ENCODE measurements at regions of chr15 and their contacts with region 1.

Region 1: GRCh38 chr15:92617549-92618520 is 37.7 kb downstream of the FAM174B start:
- DNase-seq: peak; percentile 99
- H3K4me3 ChIP-seq: no peak overlapping the region
- H3K27ac ChIP-seq: peak overlapping the region; percentile 72
- H3K4me1 ChIP-seq: peaks cover 29% of the 10 kb centered on the region
- H3K27me3 ChIP-seq: no peaks in the 10 kb centered on the region
- CTCF ChIP-seq: no peak
- POLR2A ChIP-seq: no peak

Region 2: DNA sequence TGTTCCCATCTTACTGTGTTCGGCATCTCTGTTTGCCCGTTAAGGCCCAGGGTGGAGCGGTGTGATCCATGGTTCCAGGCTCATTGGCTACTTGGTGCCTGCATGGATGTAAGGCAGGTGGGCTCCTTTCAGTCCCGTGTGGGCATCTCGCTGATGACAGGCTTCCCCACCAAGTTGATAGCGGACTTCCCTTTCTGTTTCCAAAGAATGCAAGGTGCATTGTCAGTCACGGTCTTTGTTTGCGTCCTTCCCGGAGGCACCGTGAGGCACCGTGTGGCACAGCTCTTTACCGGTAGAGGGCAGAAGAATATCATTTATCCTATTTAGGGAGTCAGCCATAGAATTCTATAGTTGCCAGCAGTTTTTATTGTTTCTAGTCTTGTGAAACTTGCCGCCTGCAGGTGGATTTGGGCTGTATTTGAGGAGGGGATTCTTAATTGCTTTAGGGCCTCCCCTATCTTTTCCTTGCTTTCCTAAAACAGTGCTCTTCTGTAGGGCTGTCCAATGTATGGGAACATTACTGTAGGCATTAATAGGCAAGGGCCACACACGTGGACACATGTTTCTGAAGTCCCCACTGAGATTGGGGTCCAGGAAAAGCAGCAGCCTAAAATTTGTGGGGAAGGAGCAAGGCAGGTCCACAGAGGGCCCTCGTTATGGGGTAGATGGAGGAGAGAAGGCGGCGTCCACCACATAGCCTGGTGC is 520.2 kb before region 1 on chr15:
- CTCF ChIA-PET with region 1: interaction called, 5 read pairs
- POLR2A ChIA-PET with region 1: no interaction called
- dilution Hi-C with region 1: no loop called
- intact Hi-C with region 1: loop called (anchors 10 kb)
- DNase-seq: peak; percentile 57
- H3K4me3 ChIP-seq: no peak overlapping the region
- H3K27ac ChIP-seq: no peak overlapping the region
- H3K4me1 ChIP-seq: no peaks in the 10 kb centered on the region
- H3K27me3 ChIP-seq: no peaks in the 10 kb centered on the region
- CTCF ChIP-seq: peak; percentile 68
- POLR2A ChIP-seq: no peak

Region 3: GRCh38 chr15:92533298-92533697 is 84.5 kb before region 1 on chr15:
- CTCF ChIA-PET with region 1: no interaction called
- POLR2A ChIA-PET with region 1: no interaction called
- dilution Hi-C with region 1: no loop called
- intact Hi-C with region 1: loop called (anchors 2 kb)
- DNase-seq: peak; percentile 86
- H3K4me3 ChIP-seq: no peak overlapping the region
- H3K27ac ChIP-seq: peak overlapping the region; percentile 82
- H3K4me1 ChIP-seq: peaks cover 21% of the 10 kb centered on the region
- H3K27me3 ChIP-seq: no peaks in the 10 kb centered on the region
- CTCF ChIP-seq: no peak
- POLR2A ChIP-seq: no peak

Region 4: DNA sequence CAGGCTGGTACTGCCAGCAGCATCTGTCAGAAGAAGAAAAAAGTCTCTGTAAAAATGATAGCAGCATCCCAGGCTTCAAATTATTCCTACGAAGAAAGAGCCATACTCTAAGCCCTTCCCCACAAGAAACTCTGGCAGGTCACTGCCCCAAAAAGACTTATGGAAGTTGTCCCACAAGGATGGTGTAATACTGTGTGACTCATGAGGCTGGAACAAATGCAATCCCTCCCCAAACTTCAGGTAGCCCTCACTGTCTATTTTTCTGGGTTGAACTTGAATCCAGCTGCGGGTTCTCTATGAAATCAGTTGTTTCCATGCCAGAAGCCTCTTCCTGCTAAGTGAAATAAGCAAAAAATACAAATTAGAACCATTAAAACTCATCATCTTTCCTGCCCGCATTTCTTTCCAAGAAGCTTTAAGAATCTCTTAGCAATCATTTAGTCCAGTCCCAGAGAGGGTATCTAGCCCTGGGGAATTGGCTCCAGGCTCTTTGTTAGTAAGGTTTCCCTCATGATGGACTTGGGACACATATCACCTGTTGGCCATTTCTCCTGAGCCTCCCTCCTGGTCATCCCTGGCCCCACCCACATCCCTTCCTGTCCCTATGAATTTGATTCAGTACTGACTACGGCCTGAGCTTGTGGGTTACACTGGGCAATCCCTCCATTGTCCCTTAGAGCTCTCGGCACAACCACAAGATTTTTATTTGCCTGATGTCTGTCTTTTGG is 13.9 kb before region 1 on chr15:
- CTCF ChIA-PET with region 1: no interaction called
- POLR2A ChIA-PET with region 1: no interaction called
- dilution Hi-C with region 1: no loop called
- intact Hi-C with region 1: no loop called
- DNase-seq: no peak
- H3K4me3 ChIP-seq: no peak overlapping the region
- H3K27ac ChIP-seq: no peak overlapping the region
- H3K4me1 ChIP-seq: no peaks in the 10 kb centered on the region
- H3K27me3 ChIP-seq: no peaks in the 10 kb centered on the region
- CTCF ChIP-seq: no peak
- POLR2A ChIP-seq: no peak

Region 5: DNA sequence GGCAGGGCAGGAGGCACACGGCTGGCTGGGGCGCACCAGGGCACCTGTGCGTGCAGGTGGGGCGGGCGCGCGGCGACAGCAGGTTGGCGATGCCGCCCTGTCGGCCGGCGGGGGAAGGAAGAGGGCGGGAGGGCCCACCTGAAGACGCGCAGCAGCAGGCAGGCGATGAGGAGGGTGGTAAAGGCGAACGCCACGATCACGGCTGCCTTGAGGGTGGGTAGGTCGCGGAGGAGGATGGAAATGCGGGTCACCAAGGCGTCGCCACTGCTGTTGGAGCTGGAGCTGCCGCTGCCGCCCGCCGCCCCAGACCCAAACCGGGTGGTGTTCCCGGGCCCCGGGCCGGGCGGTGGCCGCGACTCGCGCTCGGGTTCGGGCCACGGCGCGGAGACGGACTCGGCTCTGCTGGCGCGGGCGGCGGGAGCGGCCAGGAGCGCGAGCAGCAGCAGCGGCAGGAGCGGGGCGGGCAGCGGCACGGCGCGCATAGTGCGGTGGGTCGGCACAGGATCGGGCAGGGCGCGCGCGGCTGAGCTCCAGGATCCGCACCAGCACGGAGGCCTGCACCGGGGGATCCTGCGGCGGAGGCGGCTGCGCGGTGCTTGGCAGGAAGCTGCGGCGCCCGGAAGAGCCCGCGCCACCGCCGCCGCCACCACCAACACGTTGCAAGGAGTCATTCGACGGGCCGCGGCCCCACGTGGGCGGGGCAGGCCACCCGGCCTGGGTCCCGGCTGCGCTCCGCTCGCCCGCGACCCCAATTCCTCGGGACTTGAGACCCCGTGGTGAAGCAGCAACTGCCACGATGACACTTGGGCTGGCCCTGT is 37.6 kb after region 1 on chr15 and contains the start of gene FAM174B:
- CTCF ChIA-PET with region 1: interaction called, 5 read pairs
- POLR2A ChIA-PET with region 1: no interaction called
- dilution Hi-C with region 1: no loop called
- intact Hi-C with region 1: loop called (anchors 1 kb)
- DNase-seq: peak; percentile 51
- H3K4me3 ChIP-seq: peak within 1 kb of the TSS; percentile 47 to 93 (median 81)
- H3K27ac ChIP-seq: peak within 1 kb of the TSS; percentile 56
- H3K4me1 ChIP-seq: peaks cover 22% of the 10 kb centered on the region
- H3K27me3 ChIP-seq: no peaks in the 10 kb centered on the region
- CTCF ChIP-seq: no peak
- POLR2A ChIP-seq: peak; percentile 53
- total RNA-seq, gene FAM174B: 20.0 and 30.2 TPM in 2 replicates

Region 6: GRCh38 chr15:92709110-92709790 is 91.4 kb after region 1 on chr15:
- CTCF ChIA-PET with region 1: interaction called, 39 read pairs
- POLR2A ChIA-PET with region 1: interaction called, 8 read pairs
- dilution Hi-C with region 1: no loop called
- intact Hi-C with region 1: loop called (anchors 2 kb)
- DNase-seq: peak; percentile 79
- H3K4me3 ChIP-seq: no peak overlapping the region
- H3K27ac ChIP-seq: peak overlapping the region; percentile 84
- H3K4me1 ChIP-seq: peaks cover 30% of the 10 kb centered on the region
- H3K27me3 ChIP-seq: no peaks in the 10 kb centered on the region
- CTCF ChIP-seq: no peak
- POLR2A ChIP-seq: no peak